Mucosa of descending colon (tissue), 3 donors: ENCODE measurements at regions of chr1 and their contacts with region 1.

Region 1: DNA sequence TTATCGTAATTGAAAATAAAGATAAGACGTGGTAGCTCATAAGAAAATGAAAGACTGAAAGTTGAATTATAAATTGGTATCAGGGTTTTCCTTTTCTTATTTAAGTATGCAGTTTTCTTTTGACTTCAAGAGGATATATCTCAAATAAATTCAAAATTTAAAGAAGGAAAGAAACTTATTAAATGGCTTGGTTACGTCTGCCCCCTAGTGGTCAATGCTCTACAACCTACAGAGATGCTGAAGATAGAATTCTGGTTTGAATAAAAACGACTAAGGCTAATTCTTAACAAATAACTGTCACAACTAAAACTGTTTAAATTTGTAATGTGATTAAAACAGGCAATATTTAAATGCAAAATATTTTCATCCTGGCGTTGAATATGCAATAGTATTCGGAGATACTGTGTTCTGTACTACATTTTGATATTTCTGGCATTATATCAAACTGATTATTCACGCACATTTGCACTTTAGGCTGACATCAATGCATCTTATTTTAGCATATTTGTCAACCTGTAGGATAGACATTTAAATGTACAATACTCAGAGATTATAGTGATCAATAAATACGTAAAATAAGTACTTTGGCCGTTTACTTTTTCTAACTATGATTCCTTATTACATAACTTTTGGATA is 26.8 kb downstream of the IFI44 start:
- DNase-seq: peak in 1 of 3 donors; percentile 88
- ATAC-seq: peak; percentile 46
- H3K4me3 ChIP-seq: no peak overlapping the region
- H3K4me1 ChIP-seq: no peaks in the 10 kb centered on the region
- CTCF ChIP-seq: peak; percentile 44

Region 2: DNA sequence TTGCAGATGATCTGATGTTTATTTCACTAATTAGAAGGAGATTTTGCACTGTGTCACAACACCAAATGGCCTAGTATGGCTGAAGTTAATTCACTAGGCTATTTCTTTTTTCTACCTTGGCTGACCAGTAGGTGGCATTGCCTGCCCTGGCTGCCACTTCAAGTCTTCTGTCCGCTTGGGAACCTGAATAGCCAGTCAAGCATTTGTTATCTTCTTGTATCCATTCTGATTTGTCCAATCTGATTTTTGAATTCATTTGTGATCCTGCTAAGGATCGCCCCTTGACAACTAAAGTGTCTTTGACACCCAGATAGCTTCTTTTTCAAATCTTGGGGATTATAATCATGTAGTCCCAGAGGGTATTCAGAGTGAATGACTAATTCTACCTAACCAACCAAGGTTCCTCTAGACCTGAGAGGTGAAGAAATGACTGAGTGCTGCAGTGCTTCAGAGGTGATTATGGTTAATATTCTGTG is 531.3 kb before region 1 on chr1:
- intact Hi-C with region 1: loop called (anchors 10 kb)
- DNase-seq: peak in 2 of 3 donors; percentile 57 to 81
- ATAC-seq: peak; percentile 77
- H3K4me3 ChIP-seq: no peak overlapping the region
- H3K4me1 ChIP-seq: peaks cover 2% of the 10 kb centered on the region
- CTCF ChIP-seq: peak; percentile 71